Prostate gland (tissue), 2 donors: ENCODE measurements at regions of chr19 and their contacts with region 1.

Region 1: DNA sequence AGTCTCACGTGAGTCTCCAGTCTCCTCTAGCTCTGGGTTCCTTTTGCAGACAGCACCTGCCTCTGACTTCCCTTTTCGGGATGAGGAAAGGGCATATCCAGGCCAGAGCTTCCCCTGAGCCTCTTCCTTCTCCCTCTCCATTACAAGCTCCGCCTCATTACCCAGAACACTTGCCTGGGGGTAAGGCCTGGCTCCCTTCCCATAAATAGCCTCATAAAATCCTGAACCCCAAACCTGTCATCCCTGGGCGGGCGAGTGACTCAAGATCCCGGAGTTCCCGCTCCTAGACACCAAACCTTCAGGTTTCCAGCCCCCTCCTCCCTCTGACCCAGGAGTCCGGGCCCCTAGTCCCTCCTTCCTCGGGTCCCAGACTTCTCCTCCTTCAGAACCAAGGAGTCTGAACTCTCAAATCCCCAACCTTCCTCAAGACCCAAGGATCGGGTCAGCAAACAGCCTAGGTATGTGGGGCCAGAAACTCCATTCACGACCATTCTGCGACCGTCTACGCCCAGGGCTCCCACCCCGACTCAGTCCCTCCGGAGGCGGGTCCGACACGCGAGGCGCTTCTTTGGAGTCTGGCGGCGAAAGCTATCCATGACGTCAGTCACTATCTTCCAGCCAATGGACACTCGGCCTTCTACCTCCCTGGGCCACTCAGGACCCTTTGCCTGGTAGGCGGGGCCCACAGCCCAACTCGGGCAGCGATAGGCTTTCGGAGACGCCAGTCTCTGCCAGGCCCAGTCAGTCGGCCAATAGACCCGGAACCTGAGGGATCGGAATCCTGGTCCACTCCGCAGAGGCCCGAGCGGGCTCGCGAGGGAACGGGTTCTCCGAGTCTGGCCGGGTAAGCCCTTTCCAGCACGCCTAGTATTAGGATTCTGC is 6.5 kb upstream of the CNFN start:
- DNase-seq: peak; percentile 99
- H3K4me3 ChIP-seq: peak overlapping the region; percentile 36 to 38
- H3K27ac ChIP-seq: peak overlapping the region; percentile 85 to 88
- H3K4me1 ChIP-seq: no peaks in the 10 kb centered on the region
- H3K27me3 ChIP-seq: no peaks in the 10 kb centered on the region
- CTCF ChIP-seq: peak in 1 of 4 experiments; percentile 13
- POLR2A ChIP-seq: peak; percentile 94

Region 2: GRCh38 chr19:42219812-42220750 is 176.5 kb before region 1 on chr19 and contains the start of gene ZNF526:
- intact Hi-C with region 1: loop called (anchors 10 kb)
- DNase-seq: peak; percentile 96
- H3K4me3 ChIP-seq: peak within 1 kb of the TSS; percentile 63 to 73
- H3K27ac ChIP-seq: peak within 1 kb of the TSS; percentile 84 to 90
- H3K4me1 ChIP-seq: peaks cover 22% of the 10 kb centered on the region
- H3K27me3 ChIP-seq: no peaks in the 10 kb centered on the region
- CTCF ChIP-seq: no peak
- POLR2A ChIP-seq: peak; percentile 89
- total RNA-seq, gene ZNF526: 8.2 to 14.1 TPM

Region 3: GRCh38 chr19:42325273-42325895 is 71.2 kb before region 1 on chr19 and contains the start of gene MEGF8:
- intact Hi-C with region 1: loop called (anchors 5 kb)
- DNase-seq: peak; percentile 96
- H3K4me3 ChIP-seq: peak within 1 kb of the TSS; percentile 63 to 81
- H3K27ac ChIP-seq: peak within 1 kb of the TSS; percentile 63 to 75
- H3K4me1 ChIP-seq: peaks cover 12% of the 10 kb centered on the region
- H3K27me3 ChIP-seq: peaks cover 5% of the 10 kb centered on the region
- CTCF ChIP-seq: peak; percentile 30 to 96 (median 90)
- POLR2A ChIP-seq: peak; percentile 77
- total RNA-seq, gene MEGF8: 22.8 to 30.7 TPM